Gastrocnemius medialis (tissue), 4 donors: ENCODE measurements at regions of chr11 and their contacts with region 1.

Region 1: GRCh38 chr11:102495161-102496042 is 35.1 kb downstream of the MMP7 start:
- DNase-seq: peak in 1 of 2 donors; percentile 13
- ATAC-seq: peak; percentile 78 to 83
- H3K4me3 ChIP-seq: no peak overlapping the region
- H3K27ac ChIP-seq: no peak overlapping the region
- H3K4me1 ChIP-seq: no peaks in the 10 kb centered on the region
- H3K27me3 ChIP-seq: peaks cover 0 to 4% (median 0%) of the 10 kb centered on the region in 3 donors
- CTCF ChIP-seq: peak; percentile 42 to 70 (median 63)
- POLR2A ChIP-seq: no peak

Region 2: GRCh38 chr11:102287964-102288724 is 207.3 kb before region 1 on chr11:
- in situ Hi-C with region 1: loop called (anchors 5 to 25 kb)
- intact Hi-C with region 1: loop called (anchors 1 kb)
- DNase-seq: no peak
- ATAC-seq: peak; percentile 78 to 90
- H3K4me3 ChIP-seq: no peak overlapping the region
- H3K27ac ChIP-seq: no peak overlapping the region
- H3K4me1 ChIP-seq: no peaks in the 10 kb centered on the region
- H3K27me3 ChIP-seq: no peaks in the 10 kb centered on the region
- CTCF ChIP-seq: peak; percentile 62 to 78 (median 68)
- POLR2A ChIP-seq: no peak

Region 3: DNA sequence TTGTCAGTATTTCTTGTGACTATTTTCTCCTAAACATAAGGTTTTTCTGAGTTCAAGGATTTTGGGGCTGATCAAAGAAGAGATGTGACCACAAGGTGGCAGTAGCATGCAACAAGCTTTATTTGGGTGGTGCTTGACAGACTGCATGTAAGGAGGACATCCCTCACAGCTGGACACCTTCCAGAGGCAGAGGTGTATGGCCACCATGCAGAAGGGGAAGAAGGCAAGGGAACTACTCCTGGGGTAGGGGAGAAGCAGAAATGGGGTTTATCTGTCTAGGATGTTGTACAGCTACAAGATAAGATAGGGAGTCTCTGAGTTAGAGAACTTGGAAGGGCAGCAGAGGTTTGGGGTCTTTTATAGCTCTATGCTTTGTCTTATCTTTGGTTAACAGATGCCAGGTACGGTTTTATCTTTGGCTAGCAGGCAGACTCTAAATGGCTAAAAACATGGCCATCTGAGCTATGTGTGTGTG is 153.5 kb before region 1 on chr11:
- in situ Hi-C with region 1: loop called in 3 of 4 experiments (anchors 5 to 10 kb)
- intact Hi-C with region 1: loop called (anchors 1 kb)
- DNase-seq: peak; percentile 65 to 66
- ATAC-seq: peak; percentile 48 to 64
- H3K4me3 ChIP-seq: no peak overlapping the region
- H3K27ac ChIP-seq: no peak overlapping the region
- H3K4me1 ChIP-seq: peaks cover 8 to 12% of the 10 kb centered on the region in 2 donors
- H3K27me3 ChIP-seq: no peaks in the 10 kb centered on the region
- CTCF ChIP-seq: peak; percentile 49 to 79 (median 63)
- POLR2A ChIP-seq: no peak

Region 4: GRCh38 chr11:102346748-102347461 is 148.5 kb before region 1 on chr11 and contains the start of gene BIRC2:
- in situ Hi-C with region 1: loop called in 3 of 4 experiments (anchors 5 to 10 kb)
- intact Hi-C with region 1: no loop called
- DNase-seq: peak; percentile 85 to 90
- ATAC-seq: peak; percentile 93
- H3K4me3 ChIP-seq: peak within 1 kb of the TSS; percentile 61 to 99 (median 90)
- H3K27ac ChIP-seq: peak within 1 kb of the TSS; percentile 93 to 100 (median 98)
- H3K4me1 ChIP-seq: peaks cover 20 to 24% of the 10 kb centered on the region in 2 donors
- H3K27me3 ChIP-seq: no peaks in the 10 kb centered on the region
- CTCF ChIP-seq: peak; percentile 77 to 85 (median 83)
- POLR2A ChIP-seq: peak; percentile 81 to 83
- total RNA-seq, gene BIRC2: 30.7 to 60.3 (median 46.6) TPM

Region 5: DNA sequence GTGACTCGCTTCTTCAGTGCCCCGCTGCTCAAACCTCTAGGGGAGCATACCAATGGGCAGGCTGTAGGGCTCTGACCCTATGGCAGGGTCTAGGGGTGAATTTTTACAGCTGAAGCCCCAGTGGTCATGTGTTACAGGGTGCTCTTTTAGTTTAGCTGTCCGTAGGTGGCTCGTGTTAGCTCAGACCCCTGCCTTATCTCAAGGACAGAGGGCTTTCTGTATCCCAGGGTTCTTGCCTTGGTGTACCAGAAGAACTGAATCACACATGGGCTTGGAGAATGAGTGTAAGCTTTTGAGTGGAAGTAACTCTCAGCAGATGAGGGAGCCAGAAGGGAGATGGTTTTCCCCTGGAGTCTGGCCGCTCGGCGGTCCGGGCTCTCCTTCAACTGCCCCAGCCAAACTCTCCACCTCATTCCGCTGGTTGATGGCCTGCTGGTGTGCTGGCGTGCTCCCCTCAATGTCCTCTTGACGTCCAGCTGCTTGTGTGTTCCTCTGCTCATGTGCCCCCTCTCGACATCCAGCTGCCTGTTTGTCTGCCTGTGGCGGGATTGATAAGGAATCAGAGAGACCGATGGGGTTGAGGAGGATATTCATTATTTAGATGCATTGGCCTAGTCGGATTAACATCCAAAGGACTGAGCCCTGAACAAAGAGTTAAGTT is 110.9 kb before region 1 on chr11:
- in situ Hi-C with region 1: loop called in 3 of 4 experiments (anchors 5 to 25 kb)
- intact Hi-C with region 1: no loop called
- DNase-seq: no peak
- ATAC-seq: no peak
- H3K4me3 ChIP-seq: no peak overlapping the region
- H3K27ac ChIP-seq: peak overlapping the region in 3 of 4 donors; percentile 19 to 28 (median 27)
- H3K4me1 ChIP-seq: no peaks in the 10 kb centered on the region
- H3K27me3 ChIP-seq: no peaks in the 10 kb centered on the region
- CTCF ChIP-seq: no peak
- POLR2A ChIP-seq: no peak

Region 6: DNA sequence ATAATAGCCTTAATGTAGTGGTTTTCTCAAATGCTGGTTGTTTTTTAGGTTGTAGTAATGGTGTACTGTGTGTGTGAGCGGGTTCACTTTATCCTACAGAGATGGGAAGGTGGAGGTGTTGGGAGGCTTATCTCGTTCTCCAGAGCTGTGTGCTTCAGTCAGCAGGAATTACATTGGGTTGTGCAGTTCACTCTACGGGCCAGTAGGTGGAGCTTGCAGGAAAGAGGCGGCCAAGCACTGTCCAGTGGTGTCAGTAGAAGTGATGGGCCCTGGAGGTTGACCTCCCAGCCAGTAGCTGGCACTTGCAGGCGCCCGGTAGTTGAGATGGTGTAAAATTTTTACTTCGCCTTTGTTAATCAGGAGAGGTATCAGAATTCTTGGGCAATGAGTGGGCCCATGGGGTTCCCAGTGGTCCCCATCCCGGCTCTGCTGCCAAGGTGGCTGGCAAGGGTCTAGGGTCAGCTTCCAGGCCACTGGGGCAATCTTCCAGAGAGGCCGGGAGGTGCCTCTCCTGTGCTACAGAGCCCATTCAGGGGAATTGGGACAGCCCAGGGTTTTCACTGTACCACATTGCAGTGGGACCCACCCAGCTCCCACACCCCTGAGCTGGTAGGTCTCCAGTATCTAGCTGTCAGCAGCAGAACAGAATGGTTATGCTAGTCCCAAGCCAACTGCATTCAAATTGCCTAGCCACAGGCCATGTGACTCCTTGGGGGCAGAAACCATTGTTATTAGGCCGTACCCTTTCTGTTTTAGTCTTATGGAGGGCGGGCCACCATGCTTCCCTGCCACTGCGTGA is 104.5 kb before region 1 on chr11:
- in situ Hi-C with region 1: loop called in 3 of 4 experiments (anchors 5 to 25 kb)
- intact Hi-C with region 1: loop called (anchors 1 kb)
- DNase-seq: peak; percentile 25 to 44
- ATAC-seq: peak; percentile 76 to 93
- H3K4me3 ChIP-seq: no peak overlapping the region
- H3K27ac ChIP-seq: no peak overlapping the region
- H3K4me1 ChIP-seq: peaks cover 0 to 3% of the 10 kb centered on the region in 2 donors
- H3K27me3 ChIP-seq: no peaks in the 10 kb centered on the region
- CTCF ChIP-seq: peak; percentile 42 to 82 (median 78)
- POLR2A ChIP-seq: no peak

Region 7: GRCh38 chr11:102422817-102423712 is 72.3 kb before region 1 on chr11:
- in situ Hi-C with region 1: no loop called
- intact Hi-C with region 1: loop called (anchors 2 kb)
- DNase-seq: no peak
- ATAC-seq: no peak
- H3K4me3 ChIP-seq: no peak overlapping the region
- H3K27ac ChIP-seq: no peak overlapping the region
- H3K4me1 ChIP-seq: peaks cover 8 to 9% of the 10 kb centered on the region in 2 donors
- H3K27me3 ChIP-seq: no peaks in the 10 kb centered on the region
- CTCF ChIP-seq: no peak
- POLR2A ChIP-seq: no peak